ENCODE measurements at regions of chr4 and their contacts with region 1.

Region 1: DNA sequence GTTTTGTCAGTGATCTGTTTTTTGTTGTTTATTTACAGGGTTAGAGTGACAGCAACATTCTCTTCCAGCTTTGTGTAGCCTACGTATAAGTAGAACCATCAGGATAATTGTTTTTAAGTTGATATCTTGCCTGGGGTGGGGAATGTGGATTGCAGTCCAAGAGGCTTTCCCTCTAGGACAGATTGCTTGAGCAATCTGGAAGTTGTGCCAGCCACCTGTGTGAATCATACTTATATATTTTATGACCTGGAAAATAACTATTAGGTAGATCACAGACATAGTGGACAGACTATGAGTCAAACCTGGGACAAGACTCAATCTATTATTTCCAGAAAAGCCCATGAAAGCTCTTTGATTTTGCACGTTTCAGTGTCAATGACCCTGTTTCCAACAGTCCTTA is 98.9 kb downstream of the TLL1 start:
- DNase-seq: peak; percentile 87
- H3K4me3 ChIP-seq: no peak overlapping the region
- H3K27ac ChIP-seq: peak overlapping the region; percentile 95
- H3K4me1 ChIP-seq: peaks cover 53% of the 10 kb centered on the region
- H3K27me3 ChIP-seq: no peaks in the 10 kb centered on the region
- CTCF ChIP-seq: no peak

Region 2: DNA sequence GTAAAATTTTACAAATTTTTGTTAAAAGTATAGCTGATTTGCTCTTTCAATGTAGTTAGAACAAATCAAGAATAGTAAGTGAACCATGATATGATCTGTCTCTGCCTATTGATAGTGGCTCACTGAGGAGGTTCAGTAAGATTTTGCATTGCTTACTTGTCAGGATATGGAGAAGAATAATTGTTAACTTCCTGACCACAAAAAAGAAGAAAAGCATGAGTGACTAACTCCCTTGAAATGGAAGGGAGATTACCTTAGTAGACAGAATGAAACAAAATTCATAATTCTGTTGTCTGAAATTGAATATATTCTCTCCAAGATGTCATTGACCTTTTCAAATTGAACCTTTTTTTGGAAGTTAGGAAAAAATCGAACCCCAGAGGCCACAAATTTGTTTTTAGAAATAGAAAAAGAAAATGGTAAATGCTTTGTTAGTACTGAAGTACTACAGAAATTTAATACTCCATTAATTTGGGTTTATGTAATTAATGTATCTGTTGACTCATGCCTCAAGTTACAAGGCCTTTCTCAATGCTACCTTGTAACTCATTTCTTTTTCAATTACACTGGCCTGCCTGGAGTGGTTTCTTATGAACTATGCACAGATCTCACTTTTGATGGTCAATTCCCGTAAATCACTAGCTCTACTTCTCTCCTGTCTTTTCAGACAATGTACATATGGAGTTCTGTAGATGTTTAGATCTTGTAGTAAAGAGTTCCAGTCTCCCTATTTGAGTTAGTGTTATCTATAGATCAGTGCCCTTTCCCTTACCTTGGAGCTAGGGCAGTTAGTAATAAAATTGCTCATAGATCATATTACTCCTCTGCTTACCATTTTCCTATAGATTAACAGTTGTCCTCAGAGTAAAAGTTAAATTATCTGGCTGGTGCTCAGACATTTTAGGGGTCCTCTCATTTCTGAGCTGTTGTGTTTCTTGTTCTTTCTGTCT is 40.5 kb after region 1 on chr4:
- CTCF ChIA-PET with region 1: interaction called, 4 read pairs
- dilution Hi-C with region 1: no loop called
- in situ Hi-C with region 1: no loop called
- intact Hi-C with region 1: loop called (anchors 2 kb)
- DNase-seq: peak; percentile 73
- H3K4me3 ChIP-seq: no peak overlapping the region
- H3K27ac ChIP-seq: peak overlapping the region; percentile 75
- H3K4me1 ChIP-seq: peaks cover 12% of the 10 kb centered on the region
- H3K27me3 ChIP-seq: no peaks in the 10 kb centered on the region
- CTCF ChIP-seq: no peak

Region 3: GRCh38 chr4:166064721-166065120 is 92.8 kb after region 1 on chr4:
- CTCF ChIA-PET with region 1: no interaction called
- dilution Hi-C with region 1: no loop called
- in situ Hi-C with region 1: no loop called
- intact Hi-C with region 1: loop called (anchors 2 kb)
- DNase-seq: peak; percentile 58
- H3K4me3 ChIP-seq: peak overlapping the region in 1 of 3 experiments; percentile 11
- H3K27ac ChIP-seq: peak overlapping the region; percentile 51
- H3K4me1 ChIP-seq: peaks cover 18% of the 10 kb centered on the region
- H3K27me3 ChIP-seq: no peaks in the 10 kb centered on the region
- CTCF ChIP-seq: no peak

Measured in mammary epithelial cell (primary cell).